ENCODE measurements at regions of chr12 and their contacts with region 1.

Region 1: DNA sequence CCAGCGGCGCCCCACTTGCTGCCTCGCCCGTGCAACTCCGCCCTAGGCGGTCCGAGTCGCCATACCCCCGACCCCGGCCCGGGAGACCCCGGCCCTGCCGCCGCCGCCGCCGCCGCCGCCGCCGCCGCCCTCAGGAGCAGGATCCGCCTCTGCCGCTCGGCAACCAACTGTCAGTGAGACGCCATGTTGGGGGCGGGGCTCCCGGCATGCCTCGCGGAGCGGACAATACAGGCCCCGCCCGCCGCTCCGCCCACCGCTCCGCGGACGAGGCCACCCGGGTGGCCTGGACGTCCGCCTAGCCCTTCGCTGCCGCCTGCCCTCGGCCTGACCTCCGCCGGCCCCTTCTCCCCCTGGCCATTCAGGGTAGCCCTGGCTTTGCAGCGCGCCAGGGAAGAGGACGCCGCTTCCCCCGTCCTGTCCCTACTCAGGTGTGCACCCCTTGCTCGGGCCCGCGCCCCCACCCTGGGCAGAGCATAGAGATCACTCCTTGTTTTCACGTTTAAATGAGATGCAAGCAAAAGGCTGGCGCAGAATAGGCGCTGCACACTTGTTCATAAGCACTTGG is at the start of gene HECTD4:
- DNase-seq: peak; percentile 89
- H3K4me3 Mint-ChIP-seq: peak within 1 kb of the TSS; percentile 99
- H3K27ac Mint-ChIP-seq: peak within 1 kb of the TSS; percentile 96
- H3K4me1 Mint-ChIP-seq: peaks cover 34% of the 10 kb centered on the region
- H3K27me3 Mint-ChIP-seq: no peaks in the 10 kb centered on the region
- total RNA-seq, gene HECTD4: 34.7 and 36.6 TPM in 2 replicates

Region 2: DNA sequence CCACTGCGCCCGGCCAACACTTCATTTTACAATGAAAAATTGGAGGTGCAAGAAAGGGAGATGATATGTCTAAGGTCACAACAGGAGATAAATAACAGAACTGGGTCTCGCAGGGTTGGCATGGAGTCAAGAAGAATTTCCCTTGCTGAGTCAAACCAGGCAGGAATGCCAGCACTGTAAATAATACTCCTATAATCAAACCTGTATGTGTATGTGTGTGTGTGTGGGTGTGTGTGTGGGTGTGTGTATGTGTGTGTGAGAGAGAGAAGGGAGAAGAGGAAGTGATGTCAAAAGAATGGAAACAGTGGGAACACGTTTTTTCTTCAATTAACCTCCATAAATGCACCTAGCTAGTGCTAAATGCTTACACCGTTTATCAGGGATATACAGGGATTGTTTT is 439.8 kb before region 1 on chr12:
- intact Hi-C with region 1: loop called (anchors 1 kb)
- DNase-seq: no peak
- H3K4me3 Mint-ChIP-seq: no peak overlapping the region
- H3K27ac Mint-ChIP-seq: no peak overlapping the region
- H3K4me1 Mint-ChIP-seq: peaks cover 11% of the 10 kb centered on the region
- H3K27me3 Mint-ChIP-seq: no peaks in the 10 kb centered on the region

Region 3: GRCh38 chr12:112198120-112198733 is 184.1 kb before region 1 on chr12:
- intact Hi-C with region 1: loop called (anchors 1 kb)
- DNase-seq: peak; percentile 30
- H3K4me3 Mint-ChIP-seq: no peak overlapping the region
- H3K27ac Mint-ChIP-seq: no peak overlapping the region
- H3K4me1 Mint-ChIP-seq: peaks cover 4% of the 10 kb centered on the region
- H3K27me3 Mint-ChIP-seq: no peaks in the 10 kb centered on the region

Region 4: GRCh38 chr12:112309828-112310227 is 72.5 kb before region 1 on chr12:
- intact Hi-C with region 1: loop called (anchors 5 kb)
- DNase-seq: no peak
- H3K4me3 Mint-ChIP-seq: no peak overlapping the region
- H3K27ac Mint-ChIP-seq: no peak overlapping the region
- H3K4me1 Mint-ChIP-seq: no peaks in the 10 kb centered on the region
- H3K27me3 Mint-ChIP-seq: no peaks in the 10 kb centered on the region

Region 5: GRCh38 chr12:112409064-112409905 is 27.0 kb after region 1 on chr12 and contains the start of gene RPL6:
- intact Hi-C with region 1: loop called (anchors 1 kb)
- DNase-seq: peak; percentile 77
- H3K4me3 Mint-ChIP-seq: peak within 1 kb of the TSS; percentile 99
- H3K27ac Mint-ChIP-seq: peak within 1 kb of the TSS; percentile 100
- H3K4me1 Mint-ChIP-seq: peaks cover 27% of the 10 kb centered on the region
- H3K27me3 Mint-ChIP-seq: no peaks in the 10 kb centered on the region
- total RNA-seq, gene RPL6: 1,640 and 1,680 TPM in 2 replicates

Measured in activated T-helper 2 cell treated with anti-CD3 and anti-CD28 coated beads, Interferon-gamma antibody, Interleukin-2, Interleukin-4, amounts not matched to agents 10 μg/mL and 5 μg/mL and 100 μg/mL, durations not matched to agents 14 hours and 24 hours and 36 hours (primary cell).